ENCODE measurements at regions of chr18 and their contacts with region 1.

Region 1: DNA sequence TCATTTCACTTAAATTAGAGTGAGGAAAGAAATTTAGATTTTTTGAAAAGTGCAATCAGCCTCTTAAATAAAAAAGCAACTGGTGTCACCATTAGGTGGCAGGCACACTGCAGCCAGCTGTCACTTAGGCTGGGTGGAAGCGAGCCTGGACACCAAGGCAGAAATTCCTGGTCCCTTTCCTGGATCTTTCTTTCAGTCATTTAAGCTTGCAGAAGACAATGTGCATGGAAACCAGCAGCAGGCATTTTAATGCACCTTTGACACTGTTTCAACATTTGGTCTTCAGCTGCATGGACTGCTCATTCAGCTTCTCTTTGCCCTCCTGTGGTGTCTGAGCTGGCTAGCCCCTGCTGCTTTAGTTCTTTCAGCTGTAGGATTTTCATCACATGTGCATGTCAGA is 61.0 kb downstream of the AQP4 start:
- DNase-seq: peak; percentile 40
- H3K4me3 ChIP-seq: no peak overlapping the region
- H3K27ac ChIP-seq: no peak overlapping the region
- H3K4me1 ChIP-seq: peaks cover 0 to 6% of the 10 kb centered on the region in 2 experiments; a peak in 2 of 4 replicates
- H3K27me3 ChIP-seq: no peaks in the 10 kb centered on the region
- CTCF ChIP-seq: no peak; the same call in 1 of the 2 replicates
- EP300 ChIP-seq: no peak
- RAD21 ChIP-seq: peak; percentile 66

Region 2: DNA sequence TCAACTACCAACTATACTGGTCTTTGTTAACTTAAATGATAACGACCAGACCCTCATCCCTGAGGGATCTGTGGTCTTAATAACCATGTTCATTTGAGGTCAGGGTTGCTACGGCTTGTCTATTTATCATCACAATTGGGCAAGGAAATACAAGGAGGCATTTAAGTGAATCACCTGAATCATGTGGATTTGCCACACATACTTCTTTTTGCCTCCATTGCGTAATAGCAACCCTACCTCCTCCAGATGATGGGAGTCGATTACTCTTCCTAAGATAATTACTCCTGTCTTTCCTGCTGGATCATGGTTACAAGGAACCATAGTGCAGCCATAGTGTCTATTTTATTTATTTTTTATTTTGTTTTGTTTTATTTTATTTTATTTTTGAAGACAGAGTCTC is 536.1 kb before region 1 on chr18:
- CTCF ChIA-PET with region 1: no interaction called
- POLR2A ChIA-PET with region 1: no interaction called
- DNase-seq: no peak
- H3K4me3 ChIP-seq: no peak overlapping the region
- H3K27ac ChIP-seq: no peak overlapping the region
- H3K4me1 ChIP-seq: peaks cover 0 to 3% of the 10 kb centered on the region in 2 experiments; a peak in 1 of 4 replicates
- H3K27me3 ChIP-seq: no peaks in the 10 kb centered on the region
- CTCF ChIP-seq: no peak
- EP300 ChIP-seq: no peak
- RAD21 ChIP-seq: no peak

Region 3: DNA sequence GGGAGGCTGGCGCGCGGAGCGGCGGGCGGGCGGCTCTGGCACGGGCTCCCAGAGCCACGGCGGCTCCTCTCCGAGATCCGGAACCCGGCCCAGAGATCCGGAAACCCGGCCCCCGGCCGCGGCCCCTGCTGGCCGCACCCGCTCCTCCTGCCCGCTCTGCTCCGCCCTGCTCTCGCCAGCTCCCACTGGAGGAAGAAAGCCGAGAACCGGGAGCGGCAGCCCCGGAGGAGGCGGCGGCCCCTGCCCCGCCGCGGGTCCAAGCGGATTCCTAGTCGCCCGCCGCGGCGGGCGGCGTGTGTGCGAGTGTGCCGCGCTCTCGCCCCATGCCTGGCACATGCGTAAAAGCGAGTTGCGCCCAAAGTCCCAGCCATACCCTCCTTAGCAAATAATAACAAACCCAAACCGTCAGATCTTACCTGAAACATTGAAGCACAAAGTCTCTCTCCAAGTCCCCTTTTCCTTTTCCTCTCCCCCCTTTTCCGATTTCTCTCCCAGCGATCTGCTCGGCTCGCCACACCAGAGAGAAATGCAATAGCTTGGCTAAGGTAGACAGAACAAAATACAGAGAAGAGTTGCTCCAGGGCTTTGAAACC is 147.5 kb before region 1 on chr18:
- CTCF ChIA-PET with region 1: interaction called, 12 read pairs
- POLR2A ChIA-PET with region 1: no interaction called
- DNase-seq: peak; percentile 80
- H3K4me3 ChIP-seq: peak overlapping the region; percentile 75 to 93
- H3K27ac ChIP-seq: peak overlapping the region in 1 of 2 experiments; percentile 97; a peak in 2 of 4 replicates
- H3K4me1 ChIP-seq: peaks cover 0 to 14% of the 10 kb centered on the region in 2 experiments; a peak in 2 of 4 replicates
- H3K27me3 ChIP-seq: peaks cover 11% of the 10 kb centered on the region; the same call in 1 of the 2 replicates
- CTCF ChIP-seq: peak; percentile 26
- EP300 ChIP-seq: no peak
- RAD21 ChIP-seq: 0 out of 2 replicates have a peak, but pooled peaks have one; percentile 11

Region 4: GRCh38 chr18:26948703-26949102 is 144.2 kb after region 1 on chr18:
- CTCF ChIA-PET with region 1: no interaction called
- POLR2A ChIA-PET with region 1: no interaction called
- DNase-seq: no peak
- H3K4me3 ChIP-seq: no peak overlapping the region
- H3K27ac ChIP-seq: no peak overlapping the region
- H3K4me1 ChIP-seq: no peaks in the 10 kb centered on the region; a peak in 1 of 4 replicates
- H3K27me3 ChIP-seq: no peaks in the 10 kb centered on the region
- CTCF ChIP-seq: no peak
- EP300 ChIP-seq: no peak
- RAD21 ChIP-seq: no peak

Region 5: GRCh38 chr18:27005589-27005988 is 201.1 kb after region 1 on chr18:
- CTCF ChIA-PET with region 1: interaction called, 11 read pairs
- POLR2A ChIA-PET with region 1: no interaction called
- DNase-seq: peak; percentile 19
- H3K4me3 ChIP-seq: no peak overlapping the region
- H3K27ac ChIP-seq: no peak overlapping the region
- H3K4me1 ChIP-seq: peaks cover 0 to 6% of the 10 kb centered on the region in 2 experiments; a peak in 2 of 4 replicates
- H3K27me3 ChIP-seq: no peaks in the 10 kb centered on the region
- CTCF ChIP-seq: peak; percentile 51
- EP300 ChIP-seq: no peak
- RAD21 ChIP-seq: peak; percentile 39

Measured in SK-N-SH (cell line).